ENCODE measurements at regions of chr15 and their contacts with region 1.

Region 1: DNA sequence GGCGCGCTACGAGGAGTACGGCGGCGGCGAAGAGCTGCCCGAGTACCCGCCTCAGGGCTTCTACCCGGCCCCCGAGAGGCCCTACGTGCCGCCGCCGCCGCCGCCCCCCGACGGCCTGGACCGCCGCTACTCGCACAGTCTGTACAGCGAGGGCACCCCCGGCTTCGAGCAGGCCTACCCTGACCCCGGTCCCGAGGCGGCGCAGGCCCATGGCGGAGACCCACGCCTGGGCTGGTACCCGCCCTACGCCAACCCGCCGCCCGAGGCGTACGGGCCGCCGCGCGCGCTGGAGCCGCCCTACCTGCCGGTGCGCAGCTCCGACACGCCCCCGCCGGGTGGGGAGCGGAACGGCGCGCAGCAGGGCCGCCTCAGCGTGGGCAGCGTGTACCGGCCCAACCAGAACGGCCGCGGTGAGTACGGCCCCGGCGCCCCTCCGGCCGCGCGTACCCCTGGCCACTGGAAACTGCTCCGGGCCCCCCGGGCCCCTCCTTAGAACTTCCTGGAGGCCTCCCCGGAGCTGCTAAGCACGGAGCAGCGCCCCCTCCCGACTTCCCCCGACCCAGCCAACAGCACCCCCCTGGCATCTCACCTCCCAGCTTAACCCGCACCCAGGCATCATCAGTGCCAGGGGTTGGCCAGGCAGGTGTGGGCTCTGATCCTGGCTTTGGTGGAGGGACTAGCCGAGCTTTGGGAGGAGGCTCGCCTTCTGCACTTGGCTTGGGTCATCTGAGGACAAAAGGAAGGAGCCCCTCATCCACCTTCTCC is 1.4 kb downstream of the LOXL1 start:
- DNase-seq: peak; percentile 83
- ATAC-seq: peak; percentile 86
- H3K4me3 Mint-ChIP-seq: peak overlapping the region; percentile 73
- H3K27ac Mint-ChIP-seq: peak overlapping the region; percentile 89
- H3K4me1 Mint-ChIP-seq: peaks cover 70% of the 10 kb centered on the region
- H3K27me3 Mint-ChIP-seq: no peaks in the 10 kb centered on the region

Region 2: DNA sequence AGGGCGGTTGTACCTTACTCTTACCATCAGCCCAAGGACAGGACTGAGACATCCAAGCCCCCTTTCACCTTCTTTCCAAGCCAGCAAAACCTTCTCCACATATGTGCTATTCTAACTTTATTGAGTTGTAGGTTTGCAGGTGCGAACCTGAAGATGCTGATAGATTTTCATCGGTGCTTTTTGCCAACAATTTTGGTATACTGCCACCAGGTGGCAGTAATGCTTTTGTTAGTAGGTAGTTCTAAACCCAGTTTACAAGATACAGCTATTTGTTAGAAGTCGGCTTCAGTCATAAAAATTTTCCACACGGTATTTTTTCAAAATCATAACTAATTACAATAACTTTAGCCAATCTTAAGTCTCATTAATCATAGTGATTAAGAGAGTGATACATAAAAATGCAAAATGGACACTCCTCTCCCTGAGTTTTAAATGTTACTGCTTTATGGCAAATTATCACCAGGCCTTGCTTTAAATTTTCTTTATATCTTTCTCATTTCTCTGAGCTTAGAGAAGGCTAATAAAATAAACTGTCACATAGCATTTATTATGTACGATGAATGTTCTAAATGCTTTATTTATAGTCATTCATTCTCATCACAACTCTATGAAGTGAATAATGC is 53.7 kb before region 1 on chr15:
- CTCF ChIA-PET with region 1: interaction called, 33 read pairs
- DNase-seq: peak; percentile 57
- ATAC-seq: peak; percentile 57
- H3K4me3 Mint-ChIP-seq: no peak overlapping the region
- H3K27ac Mint-ChIP-seq: no peak overlapping the region
- H3K4me1 Mint-ChIP-seq: peaks cover 10% of the 10 kb centered on the region
- H3K27me3 Mint-ChIP-seq: peaks cover 53% of the 10 kb centered on the region

Region 3: GRCh38 chr15:73908030-73908821 is 19.4 kb before region 1 on chr15:
- CTCF ChIA-PET with region 1: interaction called, 118 read pairs
- DNase-seq: peak; percentile 86
- ATAC-seq: peak; percentile 98
- H3K4me3 Mint-ChIP-seq: no peak overlapping the region
- H3K27ac Mint-ChIP-seq: no peak overlapping the region
- H3K4me1 Mint-ChIP-seq: peaks cover 27% of the 10 kb centered on the region
- H3K27me3 Mint-ChIP-seq: no peaks in the 10 kb centered on the region

Region 4: DNA sequence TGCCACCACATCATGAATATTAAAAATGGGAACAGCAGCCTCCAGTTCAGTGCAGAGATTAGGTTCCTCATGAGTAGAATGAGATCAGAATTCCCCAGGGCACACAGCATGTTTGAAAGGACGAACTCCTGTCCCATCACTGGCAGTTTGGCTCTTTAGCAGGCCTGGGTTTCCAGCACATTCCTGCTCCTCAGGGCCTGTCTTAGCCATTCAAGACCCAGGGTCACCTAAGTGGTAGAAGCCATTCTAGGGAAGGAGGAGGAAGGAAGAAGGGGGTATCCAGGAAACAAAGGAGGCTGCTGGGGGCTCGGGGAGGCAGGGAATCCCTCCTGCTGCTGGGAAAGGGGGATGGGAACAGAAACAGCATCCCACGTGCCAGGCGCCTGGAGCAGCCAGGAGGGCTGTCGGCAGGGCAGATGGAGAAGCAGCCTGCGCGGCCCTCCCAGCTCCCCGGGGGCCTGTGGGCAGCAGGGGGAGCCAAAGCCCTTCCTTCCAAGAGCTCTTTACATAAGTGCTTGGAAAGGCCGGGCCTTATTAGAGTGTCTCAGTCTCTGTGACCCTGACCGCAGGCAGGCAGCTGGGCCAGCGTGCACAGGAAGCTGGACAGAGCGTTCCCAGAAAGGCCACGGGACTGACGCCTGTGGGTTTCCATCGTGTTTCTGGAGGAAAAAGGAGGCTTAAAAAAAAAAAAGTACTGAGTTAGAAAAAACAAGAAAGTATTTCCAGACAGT is 23.3 kb after region 1 on chr15:
- CTCF ChIA-PET with region 1: interaction called, 11 read pairs
- DNase-seq: peak; percentile 85
- ATAC-seq: peak; percentile 97
- H3K4me3 Mint-ChIP-seq: no peak overlapping the region
- H3K27ac Mint-ChIP-seq: peak overlapping the region; percentile 83
- H3K4me1 Mint-ChIP-seq: peaks cover 13% of the 10 kb centered on the region
- H3K27me3 Mint-ChIP-seq: no peaks in the 10 kb centered on the region

Region 5: DNA sequence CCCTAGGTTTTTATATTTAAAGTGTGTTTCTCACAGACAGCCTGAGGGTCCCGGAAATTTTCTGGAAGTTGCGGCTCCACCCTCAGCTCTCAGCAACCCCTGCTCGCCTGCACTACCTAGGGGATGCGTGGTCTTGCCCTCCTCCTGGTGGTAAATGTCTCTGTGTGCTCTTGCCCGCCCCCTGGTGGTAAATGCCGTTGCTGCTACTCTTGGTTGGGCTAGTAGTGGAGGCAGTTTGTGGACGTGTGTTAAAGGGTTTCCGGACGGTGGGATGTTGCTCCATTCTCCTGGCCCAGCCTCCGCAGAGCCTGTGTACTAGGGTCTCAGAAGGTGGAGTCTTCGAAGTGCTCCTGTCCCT is 37.1 kb after region 1 on chr15:
- CTCF ChIA-PET with region 1: interaction called, 39 read pairs
- DNase-seq: peak; percentile 92
- ATAC-seq: peak; percentile 94
- H3K4me3 Mint-ChIP-seq: peak overlapping the region; percentile 65
- H3K27ac Mint-ChIP-seq: peak overlapping the region; percentile 81
- H3K4me1 Mint-ChIP-seq: peaks cover 39% of the 10 kb centered on the region
- H3K27me3 Mint-ChIP-seq: peaks cover 7% of the 10 kb centered on the region

Region 6: GRCh38 chr15:74172701-74173379 is 245.2 kb after region 1 on chr15:
- CTCF ChIA-PET with region 1: no interaction called
- DNase-seq: no peak
- ATAC-seq: no peak
- H3K4me3 Mint-ChIP-seq: no peak overlapping the region
- H3K27ac Mint-ChIP-seq: no peak overlapping the region
- H3K4me1 Mint-ChIP-seq: no peaks in the 10 kb centered on the region
- H3K27me3 Mint-ChIP-seq: peaks cover 3% of the 10 kb centered on the region

Region 7: DNA sequence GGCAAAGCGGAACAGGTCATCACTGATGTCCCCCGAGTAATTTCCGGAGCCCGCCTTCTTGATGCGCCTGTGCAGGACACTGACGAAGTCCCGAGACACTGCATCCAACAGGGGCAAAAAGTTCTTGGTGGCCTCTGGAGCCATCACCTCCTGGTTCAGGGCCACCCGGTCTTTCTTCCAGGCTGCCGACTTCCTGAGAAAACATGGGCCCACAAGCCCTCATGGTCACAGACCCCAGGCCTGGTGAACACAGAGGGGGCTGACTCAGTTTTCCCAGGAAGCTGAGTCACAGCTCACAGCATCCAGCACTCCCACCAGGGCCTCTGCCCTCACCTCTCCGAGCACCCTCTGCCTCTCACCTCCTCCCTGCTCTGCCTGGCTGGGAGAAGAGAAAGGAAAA is 417.4 kb after region 1 on chr15:
- CTCF ChIA-PET with region 1: no interaction called
- DNase-seq: no peak
- ATAC-seq: no peak
- H3K4me3 Mint-ChIP-seq: no peak overlapping the region
- H3K27ac Mint-ChIP-seq: no peak overlapping the region
- H3K4me1 Mint-ChIP-seq: peaks cover 2% of the 10 kb centered on the region
- H3K27me3 Mint-ChIP-seq: no peaks in the 10 kb centered on the region

Measured in activated CD8-positive, alpha-beta memory T cell treated with anti-CD3 and anti-CD28 coated beads, Interleukin-2, amount 10 ng/mL, durations not matched to agents 7 days and 5 days (primary cell).